ENCODE measurements at regions of chr11 and their contacts with region 1.

Region 1: GRCh38 chr11:2912498-2912897 is 16.7 kb downstream of the PHLDA2 start:
- DNase-seq: peak; percentile 34
- H3K4me3 ChIP-seq: no peak overlapping the region
- CTCF ChIP-seq: no peak

Region 2: GRCh38 chr11:2901854-2902783 is 10.4 kb before region 1 on chr11:
- CTCF ChIA-PET with region 1: interaction called, 14 read pairs
- POLR2A ChIA-PET with region 1: no interaction called
- DNase-seq: peak; percentile 42
- H3K4me3 ChIP-seq: peak overlapping the region; percentile 75
- CTCF ChIP-seq: no peak

Region 3: GRCh38 chr11:3037040-3037944 is 124.8 kb after region 1 on chr11:
- CTCF ChIA-PET with region 1: no interaction called
- POLR2A ChIA-PET with region 1: no interaction called
- DNase-seq: no peak
- H3K4me3 ChIP-seq: no peak overlapping the region
- CTCF ChIP-seq: peak; percentile 78

Measured in AG04449 (cell line).